ENCODE measurements at regions of chr3 and their contacts with region 1.

Region 1: DNA sequence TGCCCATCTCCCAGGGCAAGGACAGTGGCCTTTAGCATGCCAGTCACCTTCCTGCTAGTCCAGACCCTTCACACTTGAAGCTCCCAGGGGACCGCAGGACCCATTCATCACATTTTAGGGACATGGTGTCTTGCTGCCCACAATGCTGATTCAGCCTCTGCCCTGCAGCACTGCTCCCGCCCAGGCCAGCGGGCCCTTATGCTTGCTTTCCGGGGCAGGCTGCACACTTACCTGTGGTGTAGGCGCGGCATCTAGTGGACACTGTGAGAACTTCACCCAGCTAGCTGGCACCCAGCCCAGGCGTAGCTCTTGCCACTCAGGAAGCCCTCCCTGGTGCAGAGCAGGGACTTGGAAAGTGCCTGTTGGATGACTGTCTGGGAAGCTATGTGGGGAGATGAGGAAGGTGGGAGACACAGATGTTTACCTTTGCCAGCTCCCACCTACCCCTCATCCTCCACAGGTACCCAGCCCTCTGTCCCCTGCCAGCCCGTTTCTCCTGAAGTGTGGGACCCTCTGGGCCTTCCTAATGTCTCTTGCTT is 26.2 kb upstream of the NR2C2 start:
- DNase-seq: peak; percentile 90
- H3K4me3 ChIP-seq: no peak overlapping the region
- H3K27ac ChIP-seq: no peak overlapping the region
- H3K4me1 ChIP-seq: no peaks in the 10 kb centered on the region
- H3K27me3 ChIP-seq: no peaks in the 10 kb centered on the region
- CTCF ChIP-seq: peak; percentile 95

Region 2: DNA sequence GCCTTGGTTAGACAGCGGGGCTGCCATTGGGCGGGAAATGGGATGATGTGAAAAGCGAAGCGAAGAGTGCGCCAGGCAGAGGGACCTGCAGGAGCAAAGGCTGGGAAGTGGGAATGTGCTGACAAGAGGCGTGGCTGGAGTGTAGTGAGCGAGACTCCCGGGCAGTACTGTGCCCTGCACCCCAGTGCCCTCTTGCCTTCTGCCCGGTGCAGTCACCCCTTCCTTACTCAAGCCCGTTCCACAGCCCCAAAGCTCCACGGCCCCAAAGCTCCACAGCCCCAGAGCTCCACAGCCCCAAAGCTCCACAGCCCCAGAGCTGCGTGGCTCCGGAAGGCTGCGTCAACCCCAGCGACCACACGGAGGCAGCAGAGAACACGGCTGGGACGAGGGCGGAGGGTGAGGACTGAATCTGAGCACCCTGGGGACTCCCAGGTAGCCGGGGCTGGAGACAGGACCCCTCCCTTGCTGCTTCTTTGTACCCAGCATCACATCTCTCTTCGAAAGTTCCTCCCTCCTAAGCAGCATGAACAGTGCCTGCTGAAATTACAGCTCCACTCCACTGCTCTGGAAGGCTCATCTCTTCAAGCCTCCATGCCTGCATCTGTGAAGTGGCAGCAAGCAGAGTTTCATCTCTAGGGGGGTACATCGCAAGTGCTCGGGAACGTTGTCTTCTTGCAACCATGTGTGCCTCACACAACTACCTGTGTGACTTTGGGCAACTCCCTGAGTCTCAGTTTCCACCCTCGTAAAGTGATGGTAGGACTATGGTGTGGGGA is 1263.3 kb before region 1 on chr3:
- CTCF ChIA-PET with region 1: no interaction called
- POLR2A ChIA-PET with region 1: no interaction called
- intact Hi-C with region 1: loop called (anchors 5 kb)
- DNase-seq: peak; percentile 58
- H3K4me3 ChIP-seq: no peak overlapping the region
- H3K27ac ChIP-seq: no peak overlapping the region
- H3K4me1 ChIP-seq: no peaks in the 10 kb centered on the region
- H3K27me3 ChIP-seq: peaks cover 29% of the 10 kb centered on the region
- CTCF ChIP-seq: peak; percentile 84

Region 3: DNA sequence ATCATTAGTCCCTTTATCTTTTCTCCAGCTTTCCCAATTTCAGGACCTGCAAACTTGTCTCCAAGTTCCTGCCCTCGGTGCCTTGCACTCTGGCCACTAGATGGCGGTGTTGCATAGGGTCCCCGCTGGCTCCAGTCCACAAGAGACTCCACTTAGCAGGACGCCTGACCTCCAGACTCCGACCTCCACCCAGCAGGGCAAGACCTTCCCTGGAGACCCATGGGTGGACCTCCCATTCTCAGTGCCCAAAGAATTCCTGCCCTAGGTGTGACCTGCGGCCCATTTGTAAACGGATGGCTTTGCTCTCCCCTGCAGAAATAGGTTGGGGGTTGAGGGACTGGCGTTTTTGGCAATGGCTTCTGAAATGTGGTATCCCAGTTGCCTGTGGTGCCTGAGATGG is 659.9 kb before region 1 on chr3:
- CTCF ChIA-PET with region 1: interaction called, 3 read pairs
- POLR2A ChIA-PET with region 1: no interaction called
- intact Hi-C with region 1: loop called (anchors 5 kb)
- DNase-seq: peak; percentile 74
- H3K4me3 ChIP-seq: no peak overlapping the region
- H3K27ac ChIP-seq: no peak overlapping the region
- H3K4me1 ChIP-seq: no peaks in the 10 kb centered on the region
- H3K27me3 ChIP-seq: no peaks in the 10 kb centered on the region
- CTCF ChIP-seq: peak; percentile 97

Region 4: DNA sequence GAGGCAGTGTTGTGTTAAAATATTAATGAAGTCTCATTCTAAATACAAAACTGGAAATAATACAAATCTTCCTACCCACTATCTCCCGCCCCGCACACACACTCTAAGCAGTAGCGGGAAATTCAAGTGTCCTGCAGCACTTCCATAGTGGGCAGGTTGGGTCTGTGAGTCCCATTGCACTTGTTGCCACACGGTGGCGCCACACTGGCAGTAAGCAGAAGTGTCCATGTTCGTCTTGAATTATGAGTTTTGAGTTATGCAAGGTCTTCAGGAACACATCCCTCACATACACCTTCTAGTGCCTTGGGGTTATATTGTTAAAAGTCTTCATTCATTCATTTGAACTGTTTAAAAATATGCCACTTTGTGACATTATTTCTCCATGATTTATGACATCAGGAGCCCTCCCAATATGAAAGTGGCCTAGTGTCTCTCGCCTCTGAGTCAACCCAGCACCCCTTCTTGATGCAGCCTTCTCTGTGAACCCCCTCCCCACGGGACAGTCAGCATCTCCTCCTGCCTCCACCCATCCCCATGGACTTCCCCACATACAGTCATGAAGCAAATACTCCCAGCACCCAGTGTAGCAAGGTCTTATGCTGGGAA is 287.2 kb before region 1 on chr3:
- CTCF ChIA-PET with region 1: interaction called, 3 read pairs
- POLR2A ChIA-PET with region 1: no interaction called
- intact Hi-C with region 1: loop called (anchors 2 kb)
- DNase-seq: peak; percentile 73
- H3K4me3 ChIP-seq: no peak overlapping the region
- H3K27ac ChIP-seq: no peak overlapping the region
- H3K4me1 ChIP-seq: no peaks in the 10 kb centered on the region
- H3K27me3 ChIP-seq: peaks cover 28% of the 10 kb centered on the region
- CTCF ChIP-seq: peak; percentile 96

Region 5: DNA sequence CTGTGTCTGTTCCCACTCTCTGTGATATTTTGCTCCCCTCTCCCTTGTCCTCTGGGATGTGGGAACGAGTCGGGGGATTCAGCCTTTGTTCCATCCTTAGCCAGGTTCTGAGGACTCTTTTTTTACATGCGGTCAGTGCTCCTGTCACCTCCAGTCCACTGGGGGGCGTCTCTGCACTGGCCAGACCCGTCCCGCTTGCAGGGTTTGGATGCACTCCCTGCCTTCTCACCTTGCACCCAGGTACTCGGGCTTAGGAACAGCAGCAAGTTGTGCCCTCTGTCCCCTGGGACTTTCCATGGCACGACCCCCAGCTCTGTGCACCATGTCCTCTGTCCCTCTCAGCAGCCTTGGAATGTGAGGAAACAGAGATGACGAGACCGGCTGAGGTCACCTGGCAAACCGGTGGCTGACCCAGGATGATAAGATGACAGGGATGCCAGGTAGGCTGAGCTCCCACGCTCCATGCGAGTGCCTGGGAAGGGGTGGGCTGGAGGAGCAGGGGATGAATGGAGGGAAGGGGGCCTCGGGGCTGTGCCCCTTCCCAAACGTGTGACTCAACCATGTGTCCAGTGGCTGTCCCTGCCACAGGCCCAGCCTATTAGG is 129.7 kb before region 1 on chr3:
- CTCF ChIA-PET with region 1: interaction called, 5 read pairs
- POLR2A ChIA-PET with region 1: no interaction called
- intact Hi-C with region 1: loop called (anchors 1 kb)
- DNase-seq: peak; percentile 55
- H3K4me3 ChIP-seq: no peak overlapping the region
- H3K27ac ChIP-seq: no peak overlapping the region
- H3K4me1 ChIP-seq: no peaks in the 10 kb centered on the region
- H3K27me3 ChIP-seq: peaks cover 30% of the 10 kb centered on the region
- CTCF ChIP-seq: peak; percentile 73

Region 6: GRCh38 chr3:15205934-15206661 is 285.0 kb after region 1 on chr3 and contains the start of gene CAPN7:
- CTCF ChIA-PET with region 1: no interaction called
- POLR2A ChIA-PET with region 1: no interaction called
- intact Hi-C with region 1: loop called (anchors 2 kb)
- DNase-seq: peak; percentile 97
- H3K4me3 ChIP-seq: peak within 1 kb of the TSS; percentile 97
- H3K27ac ChIP-seq: peak within 1 kb of the TSS; percentile 95
- H3K4me1 ChIP-seq: peaks cover 8% of the 10 kb centered on the region
- H3K27me3 ChIP-seq: no peaks in the 10 kb centered on the region
- CTCF ChIP-seq: peak; percentile 42; the same call in 1 of the 2 replicates
- total RNA-seq, gene CAPN7: 38.6 and 40.7 TPM in 2 replicates

Measured in A673 (cell line).